ENCODE measurements at regions of chrX and their contacts with region 1.

Region 1: DNA sequence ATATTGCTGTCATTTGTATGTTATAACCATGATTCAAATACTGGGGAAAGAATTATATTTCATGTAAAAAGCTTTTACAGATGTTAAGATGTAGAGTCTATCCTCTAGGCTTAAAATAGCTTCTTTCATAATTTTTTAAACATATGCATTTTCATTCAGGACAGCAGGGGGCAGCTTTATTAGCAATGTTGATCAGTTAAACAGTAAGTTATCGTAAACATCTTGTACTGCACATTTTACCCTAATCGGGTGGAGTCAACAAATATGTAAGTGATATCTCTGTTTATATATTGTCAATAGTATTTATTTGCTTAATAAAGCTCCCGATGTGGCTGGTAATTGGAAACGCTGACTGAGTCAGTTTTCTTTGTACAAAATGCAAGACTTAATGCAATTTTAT is 142.5 kb upstream of the MED14 start:
- DNase-seq: peak; percentile 49
- ATAC-seq: no peak
- H3K4me3 ChIP-seq: no peak overlapping the region
- H3K4me3 Mint-ChIP-seq: no peak overlapping the region
- H3K27ac ChIP-seq: no peak overlapping the region
- H3K27ac Mint-ChIP-seq: no peak overlapping the region
- H3K4me1 ChIP-seq: no peaks in the 10 kb centered on the region
- H3K4me1 Mint-ChIP-seq: no peaks in the 10 kb centered on the region
- H3K27me3 ChIP-seq: no peaks in the 10 kb centered on the region
- H3K27me3 Mint-ChIP-seq: no peaks in the 10 kb centered on the region
- CTCF ChIP-seq: peak; percentile 55

Region 2: DNA sequence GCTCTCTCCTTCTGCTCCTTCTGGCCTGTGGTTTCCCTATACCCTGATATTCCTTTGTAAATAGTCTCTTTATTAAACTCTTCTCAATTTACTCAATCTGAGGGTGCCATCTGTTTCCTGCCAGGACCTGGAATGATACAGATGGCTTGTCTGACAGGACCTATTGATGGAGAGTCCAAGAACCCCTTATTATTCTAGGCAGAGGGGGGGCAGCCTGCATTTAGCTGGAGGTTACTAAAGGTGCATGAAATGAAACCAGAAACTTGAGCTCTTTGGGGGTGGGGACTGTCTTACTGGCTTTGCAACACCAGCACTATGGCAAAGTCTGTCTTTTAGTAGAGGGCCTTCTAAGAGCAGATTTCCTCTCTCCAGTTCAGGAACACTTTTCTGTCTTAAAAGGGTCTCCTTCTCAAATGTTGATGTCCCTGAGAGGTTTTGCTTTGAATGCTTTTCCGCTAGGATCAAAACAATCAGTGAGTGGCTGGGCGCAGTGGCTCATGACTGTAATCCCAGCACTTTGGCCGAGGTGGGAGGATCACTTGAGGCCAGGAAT is 19.9 kb after region 1 on chrX:
- CTCF ChIA-PET with region 1: no interaction called
- POLR2A ChIA-PET with region 1: no interaction called
- intact Hi-C with region 1: no loop called
- DNase-seq: no peak
- ATAC-seq: no peak
- H3K4me3 ChIP-seq: no peak overlapping the region
- H3K4me3 Mint-ChIP-seq: no peak overlapping the region
- H3K27ac ChIP-seq: no peak overlapping the region
- H3K27ac Mint-ChIP-seq: no peak overlapping the region
- H3K4me1 ChIP-seq: no peaks in the 10 kb centered on the region
- H3K4me1 Mint-ChIP-seq: no peaks in the 10 kb centered on the region
- H3K27me3 ChIP-seq: no peaks in the 10 kb centered on the region
- H3K27me3 Mint-ChIP-seq: peaks cover 14% of the 10 kb centered on the region
- CTCF ChIP-seq: no peak

Region 3: DNA sequence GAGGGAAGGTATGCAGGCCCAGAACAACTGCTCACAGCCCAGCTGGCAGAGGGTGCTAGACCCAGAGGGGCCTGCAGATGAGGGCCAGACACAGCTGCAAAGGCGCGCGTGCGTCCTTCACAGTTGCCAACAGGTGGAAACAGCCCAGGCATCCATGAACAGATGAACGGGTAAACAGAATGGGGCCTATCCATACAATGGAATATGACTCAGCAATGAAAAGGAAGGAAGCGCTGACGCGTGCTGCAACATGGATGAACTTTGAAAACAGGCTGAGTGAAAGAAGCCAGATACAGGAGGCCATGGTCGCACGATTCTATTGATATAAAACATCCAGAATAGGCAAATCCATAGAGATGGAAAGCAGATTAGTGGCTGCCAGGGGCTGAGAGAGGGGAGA is 373.0 kb after region 1 on chrX:
- CTCF ChIA-PET with region 1: no interaction called
- POLR2A ChIA-PET with region 1: no interaction called
- intact Hi-C with region 1: loop called (anchors 5 kb)
- DNase-seq: no peak
- ATAC-seq: no peak
- H3K4me3 ChIP-seq: no peak overlapping the region
- H3K4me3 Mint-ChIP-seq: peak overlapping the region; percentile 32
- H3K27ac ChIP-seq: no peak overlapping the region
- H3K27ac Mint-ChIP-seq: no peak overlapping the region
- H3K4me1 ChIP-seq: peaks cover 7 to 9% of the 10 kb centered on the region in 2 donors
- H3K4me1 Mint-ChIP-seq: peaks cover 6% of the 10 kb centered on the region
- H3K27me3 ChIP-seq: no peaks in the 10 kb centered on the region
- H3K27me3 Mint-ChIP-seq: no peaks in the 10 kb centered on the region
- CTCF ChIP-seq: no peak

Region 4: GRCh38 chrX:41824551-41824950 is 946.7 kb after region 1 on chrX:
- CTCF ChIA-PET with region 1: no interaction called
- POLR2A ChIA-PET with region 1: no interaction called
- intact Hi-C with region 1: no loop called
- DNase-seq: no peak
- ATAC-seq: no peak
- H3K4me3 ChIP-seq: no peak overlapping the region
- H3K4me3 Mint-ChIP-seq: no peak overlapping the region
- H3K27ac ChIP-seq: no peak overlapping the region
- H3K27ac Mint-ChIP-seq: no peak overlapping the region
- H3K4me1 ChIP-seq: no peaks in the 10 kb centered on the region
- H3K4me1 Mint-ChIP-seq: no peaks in the 10 kb centered on the region
- H3K27me3 ChIP-seq: no peaks in the 10 kb centered on the region
- H3K27me3 Mint-ChIP-seq: no peaks in the 10 kb centered on the region
- CTCF ChIP-seq: no peak